Posterior cingulate gyrus (tissue), 11 donors: ENCODE measurements at regions of chr2 and their contacts with region 1.

Region 1: DNA sequence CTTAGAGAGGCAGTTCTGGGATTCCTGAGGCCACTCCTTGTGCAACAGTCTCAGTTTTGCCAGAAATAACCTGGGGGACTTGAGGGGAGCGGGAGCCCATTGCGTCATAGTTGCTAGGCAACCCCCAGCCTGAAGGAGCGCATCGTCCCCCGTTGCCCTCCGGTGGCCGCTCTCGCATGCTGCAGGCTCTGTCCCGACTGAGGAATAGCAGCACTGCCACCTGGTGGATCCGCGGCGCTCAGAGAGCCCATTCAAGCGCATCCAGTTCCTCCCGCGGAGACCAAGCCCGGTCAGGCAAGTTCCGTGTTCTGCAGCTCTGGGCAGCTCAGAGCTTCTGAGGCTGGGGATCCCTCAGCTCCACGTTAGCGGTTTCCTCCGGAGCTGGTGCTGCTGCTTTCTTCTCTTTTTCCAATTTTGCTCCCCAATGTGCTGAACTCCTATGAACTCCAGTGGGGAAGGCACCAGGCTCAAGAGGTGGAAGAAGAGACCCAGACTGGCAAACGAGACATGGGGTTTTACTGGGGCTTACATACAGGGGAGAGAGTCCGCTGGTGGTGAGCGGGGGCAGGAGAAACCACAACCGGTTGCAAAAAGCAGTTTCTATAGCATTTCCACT is 15.1 kb downstream of the SLC4A3 start:
- DNase-seq: peak; percentile 90 to 100 (median 97)

Region 2: GRCh38 chr2:219559204-219559920 is 83.2 kb before region 1 on chr2:
- intact Hi-C with region 1: loop called (anchors 5 kb)
- DNase-seq: peak in 2 of 10 donors; percentile 62 to 81

Region 3: DNA sequence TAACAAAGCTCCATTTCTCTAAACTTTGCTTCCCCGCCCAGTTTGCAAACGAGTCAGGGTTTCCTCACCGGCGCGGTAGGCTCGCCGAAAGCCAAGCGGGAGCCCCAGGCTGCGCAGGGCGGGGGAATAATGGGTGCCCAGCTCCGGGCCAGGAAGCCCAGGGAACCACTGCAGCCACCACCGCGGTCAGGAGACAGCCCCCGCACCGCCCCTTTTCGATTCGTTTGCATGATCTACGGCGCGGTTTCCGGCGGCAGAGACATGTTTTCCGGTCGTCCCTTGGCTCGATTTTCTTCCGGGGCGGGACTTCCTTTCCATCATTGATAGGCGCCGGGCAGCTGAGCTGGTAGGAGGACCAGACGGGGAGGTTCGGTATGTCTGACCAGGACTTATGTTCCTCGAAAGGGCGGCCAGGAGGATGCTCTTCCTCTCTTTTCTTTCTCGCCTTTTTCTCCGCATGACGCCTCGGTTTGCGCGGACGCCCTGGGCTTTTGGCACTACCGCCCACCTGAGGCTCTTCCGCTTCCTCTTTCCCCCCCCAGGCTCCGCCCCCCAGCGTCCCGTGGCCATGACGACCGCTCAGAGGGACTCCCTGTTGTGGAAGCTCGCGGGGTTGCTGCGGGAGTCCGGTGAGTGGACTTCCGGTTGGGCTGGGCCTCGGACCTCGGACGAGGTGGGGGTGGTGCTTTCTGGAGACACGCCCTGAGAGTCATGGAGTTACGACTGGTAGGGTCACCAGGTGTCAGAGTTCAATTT is 44.8 kb before region 1 on chr2 and contains the start of gene STK11IP:
- intact Hi-C with region 1: loop called (anchors 5 kb)
- DNase-seq: peak; percentile 93 to 99 (median 95)